Activated T-helper 1 cell treated with anti-CD3 and anti-CD28 coated beads, Interleukin-12 subunit alpha, Interleukin-12 subunit beta, Interleukin-2, Interleukin-4 antibody, amounts not matched to agents 30 ng/mL and 10 ng/mL and 1 ng/mL, durations not matched to agents 14 hours and 24 hours and 36 hours (primary cell): ENCODE measurements at regions of chr7 and their contacts with region 1.

Region 1: DNA sequence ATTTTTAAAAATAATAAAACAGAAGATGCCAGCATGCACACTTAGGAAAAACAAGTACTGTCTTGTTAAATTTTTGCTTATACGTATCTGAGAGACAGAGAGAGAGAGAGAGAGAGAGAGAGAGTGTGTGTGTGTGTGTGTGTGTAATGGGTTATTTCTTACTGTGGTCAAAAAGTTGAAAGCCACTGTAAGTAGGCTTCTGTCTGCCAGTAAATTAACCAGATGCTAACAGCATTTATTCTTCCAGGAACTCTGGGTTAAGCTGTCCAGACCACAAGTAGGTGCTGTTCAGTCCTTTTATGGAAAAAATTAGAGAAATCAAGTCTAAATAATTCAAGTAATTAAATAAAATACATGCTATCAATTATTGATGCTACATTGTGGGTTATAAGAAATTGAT is 39.7 kb downstream of the RNF32 start:
- DNase-seq: no peak
- H3K4me3 Mint-ChIP-seq: no peak overlapping the region
- H3K27ac Mint-ChIP-seq: peak overlapping the region; percentile 73
- H3K4me1 Mint-ChIP-seq: peaks cover 10% of the 10 kb centered on the region
- H3K27me3 Mint-ChIP-seq: no peaks in the 10 kb centered on the region

Region 2: GRCh38 chr7:156725077-156725476 is 44.8 kb after region 1 on chr7:
- intact Hi-C with region 1: loop called (anchors 5 kb)
- DNase-seq: no peak
- H3K4me3 Mint-ChIP-seq: no peak overlapping the region
- H3K27ac Mint-ChIP-seq: no peak overlapping the region
- H3K4me1 Mint-ChIP-seq: no peaks in the 10 kb centered on the region
- H3K27me3 Mint-ChIP-seq: no peaks in the 10 kb centered on the region